Body of pancreas (tissue), 4 donors: ENCODE measurements at regions of chr7 and their contacts with region 1.

Region 1: DNA sequence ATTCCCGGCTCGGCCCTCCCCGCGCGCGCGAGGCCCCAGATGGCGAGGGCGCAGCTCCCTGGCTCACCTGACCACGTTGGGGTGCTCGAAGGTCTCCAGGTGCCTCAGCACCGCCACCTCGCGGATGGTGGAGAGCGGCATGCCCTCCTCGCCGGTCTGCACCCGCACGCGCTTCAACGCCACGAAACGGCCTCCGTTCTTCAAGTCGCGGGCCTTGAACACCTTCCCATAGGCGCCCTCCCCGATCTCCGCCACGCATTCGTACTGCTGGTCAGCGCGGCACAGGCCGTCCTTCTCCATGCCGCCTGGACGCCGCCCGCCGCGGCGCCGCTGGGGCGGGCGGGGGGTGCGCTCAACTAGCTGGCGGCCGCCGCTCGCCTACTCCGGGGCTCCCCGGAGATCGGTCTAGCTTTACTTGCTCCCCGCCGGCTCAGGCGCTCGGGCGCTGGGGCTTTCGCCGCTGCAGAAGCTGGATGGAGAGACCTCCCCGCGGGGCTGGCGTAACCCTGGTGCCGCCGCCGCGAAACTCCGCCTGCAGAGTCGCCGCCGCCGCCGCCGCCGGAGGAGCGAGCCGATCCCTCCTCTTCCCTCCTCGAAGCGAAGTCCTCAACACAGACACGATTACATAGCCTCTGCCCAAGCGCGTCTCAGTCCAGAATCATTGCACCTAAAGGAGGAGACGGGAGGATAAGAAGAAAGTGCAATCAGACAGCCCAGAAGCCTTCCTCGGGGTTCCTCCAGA is 3.2 kb downstream of the CDK6 start:
- DNase-seq: peak; percentile 90 to 94 (median 92)
- ATAC-seq: peak; percentile 80
- H3K4me3 ChIP-seq: peak overlapping the region; percentile 78 to 88
- H3K27ac ChIP-seq: peak overlapping the region; percentile 82 to 90 (median 85)
- H3K4me1 ChIP-seq: peaks cover 32% of the 10 kb centered on the region
- H3K27me3 ChIP-seq: no peaks in the 10 kb centered on the region
- CTCF ChIP-seq: peak; percentile 82 to 95 (median 94)
- POLR2A ChIP-seq: peak in 1 of 3 donors; percentile 17

Region 2: GRCh38 chr7:92178927-92179924 is 654.0 kb before region 1 on chr7 and contains the start of gene LRRD1:
- intact Hi-C with region 1: no loop called
- DNase-seq: peak; percentile 93 to 97 (median 96)
- ATAC-seq: peak; percentile 99
- H3K4me3 ChIP-seq: peak within 1 kb of the TSS in 1 of 2 donors; percentile 21
- H3K27ac ChIP-seq: peak within 1 kb of the TSS; percentile 36 to 85 (median 74)
- H3K4me1 ChIP-seq: peaks cover 3% of the 10 kb centered on the region
- H3K27me3 ChIP-seq: no peaks in the 10 kb centered on the region
- CTCF ChIP-seq: peak; percentile 97 to 99 (median 98)
- POLR2A ChIP-seq: peak; percentile 67 to 91 (median 81)
- total RNA-seq, gene LRRD1: not detected

Region 3: DNA sequence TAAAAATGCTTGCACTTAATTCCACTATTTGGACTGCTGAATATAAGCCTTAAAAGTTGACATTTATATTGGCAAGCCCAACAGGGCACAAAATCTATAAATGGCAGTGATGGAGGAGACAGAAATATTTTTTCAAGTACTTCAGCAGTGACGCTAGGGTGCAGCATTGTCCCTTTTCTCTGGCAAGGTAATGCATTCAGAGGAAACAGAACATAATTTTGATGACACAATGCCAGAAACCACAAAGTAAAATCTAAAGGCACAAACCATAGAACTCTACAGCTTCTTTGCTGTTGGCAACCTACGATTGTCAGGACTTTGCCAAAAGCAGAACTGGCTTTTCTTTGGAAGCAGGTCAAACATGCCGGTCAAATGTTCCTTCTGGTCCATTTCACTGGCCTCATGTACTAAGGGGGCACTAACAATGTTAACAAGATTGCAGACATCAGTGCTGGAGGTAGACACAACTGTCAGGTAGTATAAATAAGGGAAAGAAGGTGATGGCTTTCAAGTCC is 212.1 kb before region 1 on chr7:
- intact Hi-C with region 1: loop called (anchors 10 kb)
- DNase-seq: peak; percentile 71 to 79 (median 73)
- ATAC-seq: peak; percentile 87
- H3K4me3 ChIP-seq: no peak overlapping the region
- H3K27ac ChIP-seq: peak overlapping the region in 1 of 4 donors; percentile 59
- H3K4me1 ChIP-seq: peaks cover 3% of the 10 kb centered on the region
- H3K27me3 ChIP-seq: no peaks in the 10 kb centered on the region
- CTCF ChIP-seq: peak; percentile 59 to 93 (median 87)
- POLR2A ChIP-seq: no peak

Region 4: DNA sequence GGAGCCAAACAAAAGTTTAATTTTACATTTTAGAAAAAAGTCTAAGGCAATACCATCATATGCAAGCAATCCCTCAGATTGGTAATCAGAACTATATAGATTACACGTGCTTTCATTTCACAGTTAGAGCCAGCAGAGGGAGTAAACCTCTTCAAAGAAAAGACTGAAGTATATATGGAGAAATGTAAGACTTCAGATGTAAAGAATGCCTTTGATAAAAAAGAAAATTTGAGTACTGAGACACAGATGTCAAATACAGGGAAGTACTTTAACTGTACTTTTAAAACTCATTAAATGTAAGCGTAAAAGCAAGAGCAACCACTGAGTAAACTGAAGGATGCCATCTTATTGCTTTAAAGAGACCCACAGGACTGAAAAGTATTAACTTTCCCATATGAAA is 141.6 kb before region 1 on chr7:
- intact Hi-C with region 1: loop called (anchors 10 kb)
- DNase-seq: peak in 1 of 4 donors; percentile 23
- ATAC-seq: peak; percentile 29
- H3K4me3 ChIP-seq: no peak overlapping the region
- H3K27ac ChIP-seq: no peak overlapping the region
- H3K4me1 ChIP-seq: peaks cover 17% of the 10 kb centered on the region
- H3K27me3 ChIP-seq: no peaks in the 10 kb centered on the region
- CTCF ChIP-seq: peak in 6 of 7 experiments; percentile 37 to 61 (median 53)
- POLR2A ChIP-seq: no peak

Region 5: GRCh38 chr7:92740700-92741126 is 92.5 kb before region 1 on chr7:
- intact Hi-C with region 1: no loop called
- DNase-seq: no peak
- ATAC-seq: no peak
- H3K4me3 ChIP-seq: no peak overlapping the region
- H3K27ac ChIP-seq: no peak overlapping the region
- H3K4me1 ChIP-seq: peaks cover 5% of the 10 kb centered on the region
- H3K27me3 ChIP-seq: no peaks in the 10 kb centered on the region
- CTCF ChIP-seq: no peak
- POLR2A ChIP-seq: no peak